Naive thymus-derived CD4-positive, alpha-beta T cell (primary cell): ENCODE measurements at regions of chr4 and their contacts with region 1.

Region 1: DNA sequence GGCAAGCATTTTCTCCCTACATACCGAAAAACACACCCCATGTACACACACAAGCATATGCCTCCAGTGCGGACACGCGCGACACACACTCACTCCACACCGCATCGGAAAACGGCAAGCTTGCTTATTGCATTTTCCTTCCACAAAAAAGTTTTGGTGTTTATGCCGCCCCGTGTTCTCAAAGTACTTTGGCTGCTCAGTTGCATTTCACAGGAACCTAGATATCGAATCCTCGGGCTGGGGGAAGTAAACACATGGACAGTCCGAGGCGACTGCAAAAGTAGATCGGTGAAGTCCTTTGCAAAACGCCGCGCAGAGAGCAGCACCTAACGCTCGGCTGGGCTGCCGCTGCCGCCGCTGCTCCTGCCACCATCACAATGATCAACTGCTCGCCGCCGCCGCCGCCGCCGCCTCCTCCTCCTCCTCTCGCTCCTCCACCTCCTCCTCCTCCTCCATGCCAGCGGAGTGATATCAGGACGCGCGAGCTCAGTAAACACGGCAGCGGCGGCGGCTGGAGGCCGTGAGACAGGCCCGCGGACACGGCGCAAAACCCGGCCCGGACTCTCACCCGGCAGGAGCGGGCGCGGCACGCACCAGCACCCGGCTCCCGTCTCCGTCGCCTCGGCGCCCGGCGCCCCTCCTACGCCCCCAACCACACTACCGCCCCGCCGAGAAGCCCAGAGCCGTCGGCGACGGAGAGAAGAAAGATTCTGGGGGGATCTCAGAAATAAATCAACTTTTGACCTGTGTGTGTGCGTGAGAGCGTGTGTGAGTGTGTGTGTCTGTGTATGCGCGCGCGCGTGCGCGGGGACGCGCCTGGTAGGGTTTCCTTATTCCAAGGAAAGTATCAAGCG is at the start of gene MAML3:
- DNase-seq: peak; percentile 73 to 89 (median 83)
- ATAC-seq: peak; percentile 58
- H3K4me3 ChIP-seq: peak within 1 kb of the TSS; percentile 99
- H3K4me3 Mint-ChIP-seq: peak within 1 kb of the TSS; percentile 89 to 100 (median 96)
- H3K27ac ChIP-seq: peak within 1 kb of the TSS; percentile 84
- H3K27ac Mint-ChIP-seq: peak within 1 kb of the TSS; percentile 81 to 96 (median 93)
- H3K4me1 ChIP-seq: peaks cover 0 to 13% of the 10 kb centered on the region in 2 donors
- H3K4me1 Mint-ChIP-seq: peaks cover 4 to 47% (median 32%) of the 10 kb centered on the region in 7 donors
- H3K27me3 ChIP-seq: no peaks in the 10 kb centered on the region
- H3K27me3 Mint-ChIP-seq: peaks cover 0 to 75% (median 0%) of the 10 kb centered on the region in 5 donors
- total RNA-seq, gene MAML3: 1.4 to 9.4 (median 3.6) TPM

Region 2: DNA sequence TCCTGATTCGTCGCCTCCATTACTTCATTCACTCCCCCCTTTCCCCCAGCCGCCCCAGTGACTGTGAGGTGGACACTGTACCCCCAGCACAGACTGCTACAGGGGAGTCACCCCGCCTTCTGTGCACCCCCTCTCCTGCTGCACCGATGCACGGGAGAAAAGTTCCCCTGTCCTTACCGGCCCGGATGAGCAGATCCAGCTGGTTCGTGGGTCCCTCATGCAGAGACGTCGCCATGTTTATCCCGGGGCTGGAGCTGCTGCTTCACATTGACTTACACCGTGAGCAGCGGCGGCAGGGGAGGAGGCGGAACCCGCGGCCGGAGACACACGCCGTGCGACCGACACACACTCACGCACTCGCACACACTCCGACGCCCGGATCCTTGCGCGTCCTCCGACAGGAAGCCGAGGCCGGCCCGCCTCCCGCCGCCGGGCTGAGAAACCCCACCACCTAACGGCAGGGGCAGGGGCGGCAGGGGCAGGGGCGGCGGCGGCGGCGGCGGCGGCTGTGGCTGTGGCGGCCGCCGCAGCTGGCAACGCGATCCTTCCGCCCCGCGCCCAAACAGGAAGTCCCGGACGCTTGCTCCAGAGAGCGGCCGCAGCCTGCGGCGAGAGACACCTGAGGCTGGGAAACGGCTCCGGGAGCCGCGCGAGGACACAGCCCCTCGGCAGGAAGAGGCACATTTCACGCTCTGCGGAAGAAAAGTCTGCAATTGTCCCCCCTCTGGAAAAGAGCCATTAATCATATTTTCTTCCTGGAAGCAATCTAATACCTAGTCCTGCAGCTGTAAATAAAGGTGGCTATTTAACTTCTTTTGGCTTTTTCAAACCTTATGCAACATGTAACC is 1069.8 kb before region 1 on chr4:
- CTCF ChIA-PET with region 1: no interaction called
- POLR2A ChIA-PET with region 1: no interaction called
- intact Hi-C with region 1: loop called in 1 of 2 experiments (anchors 2 kb)
- DNase-seq: peak; percentile 54 to 88 (median 84)
- ATAC-seq: peak; percentile 64
- H3K4me3 ChIP-seq: peak overlapping the region; percentile 99
- H3K4me3 Mint-ChIP-seq: peak overlapping the region; percentile 90 to 100 (median 92)
- H3K27ac ChIP-seq: peak overlapping the region; percentile 96
- H3K27ac Mint-ChIP-seq: peak overlapping the region; percentile 85 to 100 (median 96)
- H3K4me1 ChIP-seq: peaks cover 16 to 27% of the 10 kb centered on the region in 2 donors
- H3K4me1 Mint-ChIP-seq: peaks cover 16 to 49% (median 41%) of the 10 kb centered on the region in 7 donors
- H3K27me3 ChIP-seq: no peaks in the 10 kb centered on the region
- H3K27me3 Mint-ChIP-seq: no peaks in the 10 kb centered on the region

Region 3: DNA sequence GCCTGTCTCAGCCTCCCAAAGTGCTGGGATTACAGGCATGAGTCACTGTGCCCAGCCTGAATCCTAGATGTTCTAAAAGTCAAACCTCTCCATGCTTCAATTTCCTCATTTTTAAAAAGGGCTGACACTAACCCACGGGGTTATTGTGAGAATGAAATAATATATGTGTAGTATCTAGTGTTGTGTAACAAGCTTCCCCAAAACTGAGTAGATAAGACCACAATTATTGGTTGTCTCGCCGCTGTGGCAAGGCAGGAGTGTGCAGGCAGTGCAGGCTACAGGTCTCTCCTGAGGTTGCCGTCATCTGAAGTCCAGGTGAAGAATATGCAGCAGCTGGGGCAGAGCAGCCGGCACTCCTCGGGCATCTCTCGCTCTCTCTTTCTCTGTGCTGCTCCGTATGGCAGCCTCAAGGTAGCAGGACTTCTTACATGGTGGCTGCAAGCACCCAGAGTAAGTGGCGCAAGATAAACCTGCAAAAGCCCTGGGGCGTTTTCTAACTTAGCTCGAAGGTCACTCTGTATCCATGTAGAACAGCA is 669.1 kb before region 1 on chr4:
- CTCF ChIA-PET with region 1: no interaction called
- POLR2A ChIA-PET with region 1: no interaction called
- intact Hi-C with region 1: no loop called
- DNase-seq: no peak
- ATAC-seq: peak; percentile 63
- H3K4me3 ChIP-seq: no peak overlapping the region
- H3K4me3 Mint-ChIP-seq: no peak overlapping the region
- H3K27ac ChIP-seq: no peak overlapping the region
- H3K27ac Mint-ChIP-seq: no peak overlapping the region
- H3K4me1 ChIP-seq: no peaks in the 10 kb centered on the region
- H3K4me1 Mint-ChIP-seq: no peaks in the 10 kb centered on the region
- H3K27me3 ChIP-seq: no peaks in the 10 kb centered on the region
- H3K27me3 Mint-ChIP-seq: peaks cover 0 to 19% (median 0%) of the 10 kb centered on the region in 5 donors

Region 4: DNA sequence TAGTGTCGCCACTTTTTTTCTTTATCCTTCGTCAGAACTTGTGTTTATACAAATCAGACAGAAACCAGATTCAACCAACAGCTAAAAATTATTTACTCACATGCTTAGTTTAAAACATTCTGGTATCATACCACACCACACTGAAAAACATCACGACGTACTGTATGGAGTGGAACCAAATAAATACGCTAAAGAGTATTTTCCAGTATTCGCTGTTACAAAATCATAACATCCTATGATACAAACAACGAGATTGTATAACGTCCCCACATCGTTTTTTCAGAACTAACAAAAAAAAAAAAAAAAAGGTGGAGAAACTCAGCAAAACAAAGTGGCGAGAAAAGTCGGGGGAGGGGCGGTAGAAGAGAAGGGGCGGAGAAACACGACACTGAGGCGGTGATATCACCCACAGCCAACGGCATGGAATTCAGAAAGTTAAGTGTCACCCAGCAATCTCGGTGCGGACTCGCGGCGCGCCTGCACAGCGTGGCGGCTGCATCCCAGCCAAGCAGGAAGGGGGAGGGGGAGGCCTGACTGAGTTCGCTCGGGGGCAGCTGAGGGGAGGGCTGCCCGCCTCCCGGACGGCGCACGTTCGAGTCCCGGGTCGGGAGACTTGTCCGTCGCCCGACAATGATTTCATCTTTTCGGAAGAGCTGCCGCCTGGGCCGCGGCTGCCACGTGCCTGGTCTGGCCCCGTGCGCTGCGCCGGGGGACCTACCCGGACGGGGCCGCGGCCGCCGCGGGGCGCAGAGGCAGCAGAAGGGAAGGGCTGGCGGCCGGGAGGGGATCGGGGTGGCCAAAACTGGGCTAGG is 598.8 kb before region 1 on chr4:
- CTCF ChIA-PET with region 1: no interaction called
- POLR2A ChIA-PET with region 1: interaction called, 4 read pairs
- intact Hi-C with region 1: loop called (anchors 1 to 5 kb)
- DNase-seq: peak; percentile 65 to 93 (median 88)
- ATAC-seq: peak; percentile 85
- H3K4me3 ChIP-seq: peak overlapping the region; percentile 68
- H3K4me3 Mint-ChIP-seq: peak overlapping the region; percentile 89 to 99 (median 98)
- H3K27ac ChIP-seq: peak overlapping the region; percentile 76
- H3K27ac Mint-ChIP-seq: peak overlapping the region; percentile 86 to 98 (median 97)
- H3K4me1 ChIP-seq: peaks cover 4 to 11% of the 10 kb centered on the region in 2 donors
- H3K4me1 Mint-ChIP-seq: peaks cover 19 to 49% (median 40%) of the 10 kb centered on the region in 7 donors
- H3K27me3 ChIP-seq: no peaks in the 10 kb centered on the region
- H3K27me3 Mint-ChIP-seq: peaks cover 0 to 11% (median 0%) of the 10 kb centered on the region in 5 donors

Region 5: GRCh38 chr4:140012688-140013486 is 141.1 kb before region 1 on chr4:
- CTCF ChIA-PET with region 1: interaction called, 3 read pairs
- POLR2A ChIA-PET with region 1: no interaction called
- intact Hi-C with region 1: loop called (anchors 1 to 2 kb)
- DNase-seq: peak; percentile 7 to 77 (median 66)
- ATAC-seq: peak; percentile 94
- H3K4me3 ChIP-seq: no peak overlapping the region
- H3K4me3 Mint-ChIP-seq: peak overlapping the region in 1 of 10 donors; percentile 1
- H3K27ac ChIP-seq: no peak overlapping the region
- H3K27ac Mint-ChIP-seq: peak overlapping the region in 1 of 9 donors; percentile 11
- H3K4me1 ChIP-seq: no peaks in the 10 kb centered on the region
- H3K4me1 Mint-ChIP-seq: peaks cover 5 to 9% (median 8%) of the 10 kb centered on the region in 7 donors
- H3K27me3 ChIP-seq: no peaks in the 10 kb centered on the region
- H3K27me3 Mint-ChIP-seq: peaks cover 0 to 39% (median 0%) of the 10 kb centered on the region in 5 donors

Region 6: DNA sequence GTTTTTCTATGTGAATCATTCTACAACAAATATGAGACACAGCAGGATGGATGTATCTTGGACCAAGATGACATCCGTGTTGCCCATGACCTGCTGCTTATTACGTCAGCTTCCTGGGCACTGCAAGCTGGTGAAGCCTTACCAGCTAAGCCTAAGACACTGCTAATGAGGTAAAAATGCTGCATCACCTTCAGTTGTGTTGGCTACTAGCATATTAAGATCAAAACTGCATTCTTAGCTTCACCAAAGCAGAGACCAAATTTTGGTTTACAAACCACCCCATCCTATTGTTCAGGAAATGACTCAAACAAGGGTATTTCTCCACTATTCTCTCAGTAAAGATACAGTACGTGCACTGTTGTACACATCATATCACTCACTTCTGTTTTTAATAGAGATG is 50.3 kb before region 1 on chr4:
- CTCF ChIA-PET with region 1: no interaction called
- POLR2A ChIA-PET with region 1: interaction called, 5 read pairs
- intact Hi-C with region 1: loop called in 1 of 2 experiments (anchors 1 kb)
- DNase-seq: peak in 1 of 9 donors; percentile 41
- ATAC-seq: peak; percentile 83
- H3K4me3 ChIP-seq: no peak overlapping the region
- H3K4me3 Mint-ChIP-seq: peak overlapping the region in 1 of 10 donors; percentile 59
- H3K27ac ChIP-seq: no peak overlapping the region
- H3K27ac Mint-ChIP-seq: peak overlapping the region in 2 of 9 donors; percentile 61 to 72
- H3K4me1 ChIP-seq: peaks cover 0 to 12% of the 10 kb centered on the region in 2 donors
- H3K4me1 Mint-ChIP-seq: peaks cover 19 to 59% (median 31%) of the 10 kb centered on the region in 7 donors
- H3K27me3 ChIP-seq: no peaks in the 10 kb centered on the region
- H3K27me3 Mint-ChIP-seq: peaks cover 0 to 18% (median 0%) of the 10 kb centered on the region in 5 donors

Region 7: GRCh38 chr4:140137671-140138070 is 16.3 kb before region 1 on chr4:
- CTCF ChIA-PET with region 1: interaction called, 3 read pairs
- POLR2A ChIA-PET with region 1: interaction called, 13 read pairs
- intact Hi-C with region 1: loop called in 1 of 2 experiments (anchors 1 kb)
- DNase-seq: no peak
- ATAC-seq: no peak
- H3K4me3 ChIP-seq: no peak overlapping the region
- H3K4me3 Mint-ChIP-seq: peak overlapping the region in 1 of 10 donors; percentile 32
- H3K27ac ChIP-seq: no peak overlapping the region
- H3K27ac Mint-ChIP-seq: peak overlapping the region in 2 of 9 donors; percentile 28 to 32
- H3K4me1 ChIP-seq: no peaks in the 10 kb centered on the region
- H3K4me1 Mint-ChIP-seq: peaks cover 9 to 22% (median 13%) of the 10 kb centered on the region in 7 donors
- H3K27me3 ChIP-seq: no peaks in the 10 kb centered on the region
- H3K27me3 Mint-ChIP-seq: peaks cover 0 to 59% (median 0%) of the 10 kb centered on the region in 5 donors

Region 8: DNA sequence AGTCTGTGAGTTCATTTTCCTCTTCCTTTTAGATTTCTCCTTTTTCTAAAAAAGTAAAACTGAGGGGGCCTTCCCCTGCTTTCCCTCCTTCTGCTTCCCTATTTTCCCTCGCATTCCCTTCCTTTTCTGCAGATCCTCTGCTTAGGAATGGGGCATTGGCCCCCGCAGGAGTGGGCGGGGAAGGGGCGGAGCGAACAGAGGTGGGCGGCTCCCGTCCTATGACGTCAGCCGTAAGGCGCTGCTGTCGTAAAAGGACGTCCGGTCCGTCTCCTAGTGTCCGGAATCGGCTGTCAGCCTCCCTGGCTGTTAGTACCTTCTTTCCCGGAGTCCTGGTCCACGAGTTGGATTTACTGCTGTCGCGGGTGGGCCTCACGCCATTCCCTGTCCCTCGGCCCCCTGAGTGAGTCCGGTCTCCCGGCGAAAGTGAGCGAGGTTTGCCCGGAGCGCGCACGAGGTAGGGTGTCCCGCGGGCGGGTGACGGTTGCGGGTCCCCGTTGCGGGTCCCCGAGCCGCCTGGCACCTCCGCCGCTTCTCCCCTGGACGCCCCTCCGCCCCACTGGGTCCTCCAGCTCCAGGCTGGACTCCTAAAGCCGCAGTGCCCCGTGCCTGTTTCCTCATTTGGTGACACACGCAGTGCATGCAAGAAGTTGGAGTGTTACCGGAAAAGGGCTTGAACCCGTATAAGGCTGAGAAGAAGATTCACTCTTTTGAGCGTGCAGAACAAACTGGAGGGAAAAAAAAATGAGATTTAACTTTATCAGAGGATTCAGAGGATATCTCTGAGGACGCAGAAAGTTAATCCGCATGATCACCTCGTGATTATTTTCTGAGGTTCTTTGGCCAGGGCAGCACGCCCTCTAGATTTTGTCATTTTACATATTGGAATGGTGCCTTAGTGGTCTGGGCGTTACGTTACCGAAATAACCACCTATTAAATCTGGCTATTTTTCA is 1067.0 kb after region 1 on chr4 and contains the start of gene ZNF330:
- CTCF ChIA-PET with region 1: no interaction called
- POLR2A ChIA-PET with region 1: no interaction called
- intact Hi-C with region 1: loop called in 1 of 2 experiments (anchors 10 kb)
- DNase-seq: peak; percentile 80 to 97 (median 90)
- ATAC-seq: peak; percentile 97
- H3K4me3 ChIP-seq: peak within 1 kb of the TSS; percentile 94
- H3K4me3 Mint-ChIP-seq: peak within 1 kb of the TSS; percentile 91 to 99 (median 94)
- H3K27ac ChIP-seq: peak within 1 kb of the TSS; percentile 93
- H3K27ac Mint-ChIP-seq: peak within 1 kb of the TSS; percentile 91 to 97 (median 96)
- H3K4me1 ChIP-seq: peaks cover 9 to 13% of the 10 kb centered on the region in 2 donors
- H3K4me1 Mint-ChIP-seq: peaks cover 24 to 58% (median 52%) of the 10 kb centered on the region in 7 donors
- H3K27me3 ChIP-seq: no peaks in the 10 kb centered on the region
- H3K27me3 Mint-ChIP-seq: peaks cover 0 to 18% (median 6%) of the 10 kb centered on the region in 5 donors
- total RNA-seq, gene ZNF330: 31.7 to 44.7 (median 41.0) TPM

Region 9: GRCh38 chr4:141416219-141416618 is 1262.3 kb after region 1 on chr4:
- CTCF ChIA-PET with region 1: no interaction called
- POLR2A ChIA-PET with region 1: no interaction called
- intact Hi-C with region 1: no loop called
- DNase-seq: no peak
- ATAC-seq: no peak
- H3K4me3 ChIP-seq: no peak overlapping the region
- H3K4me3 Mint-ChIP-seq: no peak overlapping the region
- H3K27ac ChIP-seq: no peak overlapping the region
- H3K27ac Mint-ChIP-seq: no peak overlapping the region
- H3K4me1 ChIP-seq: no peaks in the 10 kb centered on the region
- H3K4me1 Mint-ChIP-seq: no peaks in the 10 kb centered on the region
- H3K27me3 ChIP-seq: no peaks in the 10 kb centered on the region
- H3K27me3 Mint-ChIP-seq: peaks cover 0 to 6% (median 0%) of the 10 kb centered on the region in 5 donors